Calu3 (cell line): ENCODE measurements at regions of chrX and their contacts with region 1.

Region 1: DNA sequence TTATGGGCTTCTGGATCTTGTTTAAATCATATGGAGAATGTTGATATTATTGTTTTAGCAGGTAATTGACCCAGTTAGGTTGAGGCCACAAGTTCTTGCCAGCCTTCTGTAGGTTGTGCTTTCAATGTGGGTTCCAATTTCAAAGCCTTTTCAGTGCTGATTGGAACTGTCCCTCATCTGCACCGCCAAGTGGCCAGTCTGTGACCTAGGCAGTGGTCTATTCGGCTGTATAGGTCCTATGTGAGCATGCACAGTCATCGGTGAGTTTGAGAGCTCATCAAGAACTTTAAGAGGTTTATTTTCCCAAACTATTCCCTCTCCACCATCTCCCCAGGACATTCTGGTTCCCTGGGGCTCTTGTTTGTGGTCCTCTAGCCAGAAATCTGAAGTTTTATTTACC is 35.7 kb downstream of the DDX53 start:
- DNase-seq: no peak
- H3K4me3 Mint-ChIP-seq: no peak overlapping the region
- H3K27ac Mint-ChIP-seq: no peak overlapping the region
- H3K4me1 Mint-ChIP-seq: no peaks in the 10 kb centered on the region
- H3K27me3 Mint-ChIP-seq: no peaks in the 10 kb centered on the region
- CTCF ChIP-seq: no peak

Region 2: DNA sequence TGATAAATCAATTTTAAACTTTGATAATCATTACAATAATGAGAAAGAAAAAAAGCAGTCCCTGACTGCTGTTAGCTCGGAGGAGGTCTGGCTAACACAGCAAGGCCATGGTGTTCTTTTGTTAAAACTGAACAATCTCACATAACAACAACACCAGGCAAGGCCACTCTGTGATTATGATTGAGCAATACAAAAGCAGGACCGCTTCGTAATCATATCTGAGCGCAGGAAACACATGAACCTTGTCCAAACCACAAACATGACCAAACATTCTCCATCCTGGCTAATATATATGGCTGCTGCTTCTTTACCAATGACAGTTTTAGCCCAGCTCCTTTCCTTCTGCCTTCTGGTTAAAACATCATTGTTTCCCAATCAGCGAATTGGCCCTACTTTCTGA is 112.5 kb before region 1 on chrX:
- CTCF ChIA-PET with region 1: no interaction called
- intact Hi-C with region 1: no loop called
- DNase-seq: no peak
- H3K4me3 Mint-ChIP-seq: no peak overlapping the region
- H3K27ac Mint-ChIP-seq: no peak overlapping the region
- H3K4me1 Mint-ChIP-seq: no peaks in the 10 kb centered on the region
- H3K27me3 Mint-ChIP-seq: no peaks in the 10 kb centered on the region
- CTCF ChIP-seq: no peak

Region 3: GRCh38 chrX:23194903-23195554 is 159.5 kb after region 1 on chrX:
- CTCF ChIA-PET with region 1: interaction called, 10 read pairs
- intact Hi-C with region 1: no loop called
- DNase-seq: no peak
- H3K4me3 Mint-ChIP-seq: no peak overlapping the region
- H3K27ac Mint-ChIP-seq: no peak overlapping the region
- H3K4me1 Mint-ChIP-seq: no peaks in the 10 kb centered on the region
- H3K27me3 Mint-ChIP-seq: no peaks in the 10 kb centered on the region
- CTCF ChIP-seq: no peak

Region 4: GRCh38 chrX:23263892-23264291 is 228.4 kb after region 1 on chrX:
- CTCF ChIA-PET with region 1: no interaction called
- intact Hi-C with region 1: no loop called
- DNase-seq: no peak
- H3K4me3 Mint-ChIP-seq: no peak overlapping the region
- H3K27ac Mint-ChIP-seq: no peak overlapping the region
- H3K4me1 Mint-ChIP-seq: no peaks in the 10 kb centered on the region
- H3K27me3 Mint-ChIP-seq: peaks cover 9% of the 10 kb centered on the region
- CTCF ChIP-seq: no peak

Region 5: DNA sequence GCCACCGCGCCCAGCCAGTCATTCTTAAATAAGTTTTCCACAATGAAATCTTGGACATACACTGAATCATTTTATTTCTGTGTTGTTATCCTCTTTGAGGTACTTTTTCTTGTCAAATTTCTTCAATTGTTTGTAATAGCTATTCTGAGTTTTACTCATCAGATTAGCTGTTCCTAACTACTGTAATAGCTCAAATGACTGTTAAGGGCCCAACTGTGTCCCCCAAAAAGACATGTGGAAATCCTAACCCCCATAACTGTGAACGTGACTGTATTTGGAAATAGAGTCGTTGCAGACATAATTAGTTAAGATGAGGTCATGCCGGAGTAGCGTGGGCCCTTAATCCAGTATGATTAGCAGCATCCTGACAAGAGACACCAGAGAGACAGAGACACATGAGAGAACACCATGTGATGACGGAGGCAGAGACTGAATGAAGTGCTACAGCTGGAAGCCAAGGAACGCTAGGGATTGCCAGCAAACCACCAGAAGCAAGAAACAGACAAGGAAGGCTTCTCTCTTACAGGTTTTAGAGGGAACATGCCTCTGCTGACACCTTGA is 684.7 kb after region 1 on chrX:
- CTCF ChIA-PET with region 1: no interaction called
- intact Hi-C with region 1: no loop called
- DNase-seq: no peak
- H3K4me3 Mint-ChIP-seq: no peak overlapping the region
- H3K27ac Mint-ChIP-seq: no peak overlapping the region
- H3K4me1 Mint-ChIP-seq: no peaks in the 10 kb centered on the region
- H3K27me3 Mint-ChIP-seq: no peaks in the 10 kb centered on the region
- CTCF ChIP-seq: no peak